Mammary epithelial cell (primary cell): ENCODE measurements at regions of chr2 and their contacts with region 1.

Region 1: GRCh38 chr2:45930396-45930792 is 278.9 kb downstream of the PRKCE start:
- DNase-seq: peak; percentile 39
- H3K4me3 ChIP-seq: no peak overlapping the region
- H3K27ac ChIP-seq: no peak overlapping the region
- H3K4me1 ChIP-seq: peaks cover 9% of the 10 kb centered on the region
- H3K27me3 ChIP-seq: no peaks in the 10 kb centered on the region
- CTCF ChIP-seq: no peak

Region 2: DNA sequence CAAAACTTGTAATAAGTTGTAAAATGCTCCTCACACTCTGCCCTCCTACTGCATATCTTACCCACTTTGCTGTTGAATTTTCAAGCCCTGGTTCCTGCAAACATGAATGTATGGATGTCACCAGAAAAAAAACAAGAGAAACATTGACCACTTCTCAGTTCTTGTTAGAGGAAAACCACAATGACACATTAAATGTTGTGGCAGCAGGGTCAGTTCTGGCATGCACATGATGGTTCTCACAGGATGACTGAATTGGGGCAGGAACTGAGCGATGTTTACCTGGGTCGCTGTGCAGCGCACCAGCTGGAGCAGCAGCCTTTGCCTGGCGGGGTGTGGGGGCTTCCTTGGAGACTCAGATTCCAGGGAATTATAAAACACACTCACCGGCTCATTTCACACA is 293.0 kb before region 1 on chr2:
- CTCF ChIA-PET with region 1: no interaction called
- dilution Hi-C with region 1: loop called (anchors 5 kb)
- in situ Hi-C with region 1: loop called (anchors 5 to 10 kb)
- intact Hi-C with region 1: no loop called
- DNase-seq: peak; percentile 80
- H3K4me3 ChIP-seq: no peak overlapping the region
- H3K27ac ChIP-seq: no peak overlapping the region
- H3K4me1 ChIP-seq: peaks cover 12% of the 10 kb centered on the region
- H3K27me3 ChIP-seq: peaks cover 4% of the 10 kb centered on the region
- CTCF ChIP-seq: no peak